Naive thymus-derived CD4-positive, alpha-beta T cell (primary cell): ENCODE measurements at regions of chr19 and their contacts with region 1.

Region 1: DNA sequence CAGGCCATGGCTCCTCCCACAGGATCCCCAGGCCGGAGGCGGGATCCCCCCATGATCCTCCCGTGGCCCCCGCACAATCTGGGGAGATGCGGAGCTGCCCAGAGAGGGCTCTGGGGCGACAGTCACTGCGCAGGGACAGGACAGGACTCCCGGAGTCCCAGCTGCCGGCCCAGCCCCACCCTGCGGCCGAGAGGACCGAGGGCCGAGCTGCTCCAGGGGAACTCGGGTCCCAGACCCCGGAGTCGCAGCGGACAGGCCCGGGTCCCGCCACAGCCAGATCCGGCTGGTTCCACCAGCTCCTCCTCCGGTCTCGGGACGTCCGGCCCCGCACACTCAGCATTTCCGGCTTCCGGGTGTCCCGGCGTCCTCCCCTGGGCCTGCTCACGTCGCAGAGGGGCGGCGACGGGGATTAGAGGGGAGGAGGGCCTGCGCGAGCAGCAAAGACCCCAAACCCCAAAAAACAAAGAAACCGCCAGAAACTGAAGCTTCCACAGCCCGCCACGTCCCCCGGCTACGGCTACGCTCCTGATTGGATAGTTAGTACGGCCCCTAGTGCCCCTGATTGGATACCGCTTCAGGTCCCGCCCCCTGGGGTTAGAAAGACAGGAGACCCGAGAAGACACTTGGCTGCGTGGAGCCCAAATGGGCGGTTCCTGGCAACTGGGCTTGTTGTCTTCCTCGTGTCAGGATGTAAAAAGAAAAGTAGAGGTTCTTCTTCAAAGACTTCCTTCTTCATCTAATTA is 21.3 kb upstream of the OR10H1 start:
- DNase-seq: peak; percentile 81 to 98 (median 97)
- ATAC-seq: peak; percentile 94
- H3K4me3 ChIP-seq: peak overlapping the region; percentile 60
- H3K4me3 Mint-ChIP-seq: peak overlapping the region; percentile 88 to 99 (median 95)
- H3K27ac ChIP-seq: peak overlapping the region; percentile 90
- H3K27ac Mint-ChIP-seq: peak overlapping the region in 7 of 9 donors; percentile 95 to 100 (median 98)
- H3K4me1 ChIP-seq: peaks cover 5 to 7% of the 10 kb centered on the region in 2 donors
- H3K4me1 Mint-ChIP-seq: peaks cover 18 to 28% (median 24%) of the 10 kb centered on the region in 7 donors
- H3K27me3 ChIP-seq: no peaks in the 10 kb centered on the region
- H3K27me3 Mint-ChIP-seq: no peaks in the 10 kb centered on the region

Region 2: GRCh38 chr19:14689598-14690503 is 1146.9 kb before region 1 on chr19 and contains the start of gene ZNF333:
- CTCF ChIA-PET with region 1: no interaction called
- POLR2A ChIA-PET with region 1: no interaction called
- intact Hi-C with region 1: loop called in 1 of 2 experiments (anchors 2 kb)
- DNase-seq: peak; percentile 92 to 99 (median 96)
- ATAC-seq: peak; percentile 94
- H3K4me3 ChIP-seq: peak within 1 kb of the TSS; percentile 93
- H3K4me3 Mint-ChIP-seq: peak within 1 kb of the TSS; percentile 81 to 99 (median 94)
- H3K27ac ChIP-seq: peak within 1 kb of the TSS; percentile 97
- H3K27ac Mint-ChIP-seq: peak within 1 kb of the TSS; percentile 93 to 100 (median 99)
- H3K4me1 ChIP-seq: peaks cover 6 to 16% of the 10 kb centered on the region in 2 donors
- H3K4me1 Mint-ChIP-seq: peaks cover 5 to 26% (median 23%) of the 10 kb centered on the region in 7 donors
- H3K27me3 ChIP-seq: no peaks in the 10 kb centered on the region
- H3K27me3 Mint-ChIP-seq: peaks cover 0 to 2% (median 0%) of the 10 kb centered on the region in 5 donors
- total RNA-seq, gene ZNF333: 15.4 to 56.3 (median 34.7) TPM

Region 3: GRCh38 chr19:15418588-15419412 is 418.0 kb before region 1 on chr19 and contains the start of gene AKAP8L:
- CTCF ChIA-PET with region 1: no interaction called
- POLR2A ChIA-PET with region 1: no interaction called
- intact Hi-C with region 1: loop called in 1 of 2 experiments (anchors 2 kb)
- DNase-seq: peak; percentile 90 to 100 (median 99)
- ATAC-seq: peak; percentile 95
- H3K4me3 ChIP-seq: peak within 1 kb of the TSS; percentile 71
- H3K4me3 Mint-ChIP-seq: peak within 1 kb of the TSS; percentile 92 to 100 (median 99)
- H3K27ac ChIP-seq: peak within 1 kb of the TSS; percentile 88
- H3K27ac Mint-ChIP-seq: peak within 1 kb of the TSS; percentile 94 to 99 (median 97)
- H3K4me1 ChIP-seq: peaks cover 23 to 25% of the 10 kb centered on the region in 2 donors
- H3K4me1 Mint-ChIP-seq: peaks cover 31 to 53% (median 42%) of the 10 kb centered on the region in 7 donors
- H3K27me3 ChIP-seq: no peaks in the 10 kb centered on the region
- H3K27me3 Mint-ChIP-seq: no peaks in the 10 kb centered on the region
- total RNA-seq, gene AKAP8L: 81.2 to 208 (median 146) TPM

Region 4: DNA sequence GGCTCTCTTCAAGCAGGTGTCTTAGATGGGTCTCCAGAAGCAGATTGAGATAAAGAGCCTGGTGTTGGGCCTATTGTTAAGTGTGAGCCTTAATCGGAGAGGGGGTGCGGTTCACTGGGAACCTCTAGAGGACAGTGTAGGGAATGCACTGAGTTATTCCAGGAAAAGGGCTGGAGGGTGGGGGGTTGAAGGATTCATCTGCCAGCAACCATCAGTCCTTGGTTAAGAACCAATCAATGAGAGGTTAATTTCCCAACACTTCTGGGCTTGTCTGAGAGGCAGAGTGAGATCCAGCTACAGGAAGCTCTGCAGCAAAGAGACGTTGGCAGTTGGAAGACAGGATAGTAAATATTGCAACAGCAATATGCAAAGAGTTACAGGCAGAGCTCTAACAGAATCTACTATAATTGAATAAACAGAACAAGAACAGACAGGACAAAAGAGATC is 32.4 kb after region 1 on chr19:
- CTCF ChIA-PET with region 1: interaction called, 4 read pairs
- POLR2A ChIA-PET with region 1: interaction called, 4 read pairs
- intact Hi-C with region 1: loop called (anchors 1 to 2 kb)
- DNase-seq: peak in 7 of 9 donors; percentile 24 to 55 (median 45)
- ATAC-seq: peak; percentile 89
- H3K4me3 ChIP-seq: no peak overlapping the region
- H3K4me3 Mint-ChIP-seq: no peak overlapping the region
- H3K27ac ChIP-seq: no peak overlapping the region
- H3K27ac Mint-ChIP-seq: peak overlapping the region in 2 of 9 donors; percentile 0 to 12
- H3K4me1 ChIP-seq: peaks cover 4 to 5% of the 10 kb centered on the region in 2 donors
- H3K4me1 Mint-ChIP-seq: peaks cover 5 to 20% (median 12%) of the 10 kb centered on the region in 7 donors
- H3K27me3 ChIP-seq: no peaks in the 10 kb centered on the region
- H3K27me3 Mint-ChIP-seq: peaks cover 6 to 13% (median 9%) of the 10 kb centered on the region in 5 donors

Region 5: DNA sequence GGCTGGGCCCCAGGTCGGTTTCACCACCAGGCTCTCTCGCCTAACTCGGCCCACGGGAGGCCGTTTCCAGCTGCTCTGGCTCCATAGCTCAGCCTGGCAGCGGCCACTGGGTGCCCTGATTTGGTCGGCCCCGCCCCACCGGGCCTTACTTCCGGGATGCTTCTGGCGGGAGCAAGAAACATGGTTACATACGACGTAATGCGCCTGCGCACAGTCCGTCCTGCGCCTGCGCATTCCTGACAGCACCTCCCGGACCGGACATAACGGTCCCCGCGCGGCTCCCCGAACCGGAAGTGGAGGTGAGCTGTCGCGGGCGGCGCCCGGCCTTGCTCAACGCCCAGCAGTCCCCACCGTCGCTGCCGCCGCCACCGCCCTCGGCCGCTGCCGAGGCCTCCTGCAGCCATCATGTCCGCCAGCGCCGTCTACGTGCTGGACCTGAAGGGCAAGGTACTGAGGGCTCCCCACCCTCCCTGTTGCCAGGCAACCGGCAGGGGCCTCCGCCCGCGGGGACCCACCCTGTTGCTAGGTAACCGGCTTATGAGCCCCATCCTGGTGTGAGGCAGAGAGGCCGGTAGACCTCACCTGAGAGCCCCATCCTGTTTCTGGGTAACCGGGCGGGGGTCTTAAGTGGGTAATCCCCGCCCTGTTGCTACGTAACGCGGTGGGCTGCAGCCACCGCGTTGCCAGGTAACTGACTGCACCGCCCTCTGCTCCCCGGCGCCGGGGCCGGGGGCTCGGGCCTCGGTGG is 361.0 kb after region 1 on chr19 and contains the start of gene AP1M1:
- CTCF ChIA-PET with region 1: no interaction called
- POLR2A ChIA-PET with region 1: no interaction called
- intact Hi-C with region 1: loop called in 1 of 2 experiments (anchors 2 kb)
- DNase-seq: peak; percentile 96 to 99 (median 97)
- ATAC-seq: peak; percentile 94
- H3K4me3 ChIP-seq: peak within 1 kb of the TSS; percentile 99
- H3K4me3 Mint-ChIP-seq: peak within 1 kb of the TSS; percentile 81 to 95 (median 90)
- H3K27ac ChIP-seq: peak within 1 kb of the TSS; percentile 95
- H3K27ac Mint-ChIP-seq: peak within 1 kb of the TSS; percentile 90 to 99 (median 97)
- H3K4me1 ChIP-seq: peaks cover 16 to 23% of the 10 kb centered on the region in 2 donors
- H3K4me1 Mint-ChIP-seq: peaks cover 38 to 49% (median 46%) of the 10 kb centered on the region in 7 donors
- H3K27me3 ChIP-seq: no peaks in the 10 kb centered on the region
- H3K27me3 Mint-ChIP-seq: no peaks in the 10 kb centered on the region
- total RNA-seq, gene AP1M1: 94.9 to 149 (median 125) TPM

Region 6: GRCh38 chr19:16659831-16660708 is 823.3 kb after region 1 on chr19 and contains the start of gene SMIM7:
- CTCF ChIA-PET with region 1: no interaction called
- POLR2A ChIA-PET with region 1: no interaction called
- intact Hi-C with region 1: loop called in 1 of 2 experiments (anchors 2 kb)
- DNase-seq: peak; percentile 95 to 100 (median 99)
- ATAC-seq: peak; percentile 98
- H3K4me3 ChIP-seq: peak within 1 kb of the TSS; percentile 74
- H3K4me3 Mint-ChIP-seq: peak within 1 kb of the TSS; percentile 88 to 100 (median 98)
- H3K27ac ChIP-seq: peak within 1 kb of the TSS; percentile 91
- H3K27ac Mint-ChIP-seq: peak within 1 kb of the TSS; percentile 96 to 99 (median 98)
- H3K4me1 ChIP-seq: peaks cover 19 to 30% of the 10 kb centered on the region in 2 donors
- H3K4me1 Mint-ChIP-seq: peaks cover 22 to 55% (median 41%) of the 10 kb centered on the region in 7 donors
- H3K27me3 ChIP-seq: no peaks in the 10 kb centered on the region
- H3K27me3 Mint-ChIP-seq: peaks cover 0 to 24% (median 0%) of the 10 kb centered on the region in 5 donors
- total RNA-seq, gene SMIM7: 56.9 to 108 (median 78.5) TPM